Ovary (tissue), 10 donors: ENCODE measurements at regions of chr3 and their contacts with region 1.

Region 1: GRCh38 chr3:51501833-51502561 is 2.2 kb upstream of the DCAF1 start:
- DNase-seq: peak; percentile 69 to 89 (median 85)
- H3K4me3 ChIP-seq: no peak overlapping the region
- H3K27ac ChIP-seq: no peak overlapping the region
- H3K4me1 ChIP-seq: no peaks in the 10 kb centered on the region
- H3K27me3 ChIP-seq: no peaks in the 10 kb centered on the region
- CTCF ChIP-seq: peak; percentile 89 to 92 (median 90)
- EP300 ChIP-seq: no peak
- POLR2A ChIP-seq: no peak

Region 2: DNA sequence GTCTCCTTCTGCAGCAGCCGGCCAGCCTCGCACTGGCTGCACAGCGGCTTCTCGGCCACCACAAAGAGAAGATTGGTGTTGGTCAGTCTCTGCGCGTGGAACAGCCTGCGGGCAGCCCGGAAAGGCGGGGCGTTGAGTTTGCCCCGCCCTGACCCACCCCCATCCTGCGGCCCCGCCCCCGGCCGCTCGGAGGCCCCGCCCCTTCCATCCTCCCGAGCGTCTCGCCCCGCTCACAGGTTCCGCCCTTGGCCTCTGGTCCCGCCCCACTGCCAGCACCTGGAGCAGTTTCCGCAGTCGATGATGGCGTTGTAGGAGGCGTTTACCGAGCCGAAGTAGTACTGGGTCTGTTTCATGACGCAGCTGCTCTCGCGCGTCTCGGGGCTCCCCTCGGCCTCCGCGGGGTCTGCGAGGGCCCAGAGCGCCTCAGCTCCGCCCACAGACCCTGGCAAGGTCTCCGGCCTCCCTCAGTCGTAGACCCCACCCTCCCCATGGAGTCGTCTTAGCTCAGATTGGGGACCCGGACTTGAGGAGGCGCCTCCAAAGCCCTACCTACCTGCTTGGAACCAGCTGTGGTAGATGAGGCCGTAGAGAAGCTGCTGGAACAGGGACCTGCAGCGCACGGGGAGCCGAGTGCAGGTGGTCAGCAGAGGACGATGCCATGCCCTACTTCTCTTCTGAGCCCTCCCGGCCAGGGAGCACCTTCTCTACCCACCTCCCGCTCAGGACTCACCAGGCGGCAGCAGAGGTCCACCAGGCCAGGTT is 1136.7 kb before region 1 on chr3:
- intact Hi-C with region 1: loop called in 1 of 4 experiments (anchors 10 kb)
- DNase-seq: peak; percentile 88 to 92 (median 92)
- H3K4me3 ChIP-seq: peak overlapping the region; percentile 66
- H3K27ac ChIP-seq: peak overlapping the region in 1 of 2 donors; percentile 61
- H3K4me1 ChIP-seq: peaks cover 9% of the 10 kb centered on the region
- H3K27me3 ChIP-seq: no peaks in the 10 kb centered on the region
- CTCF ChIP-seq: no peak
- EP300 ChIP-seq: no peak
- POLR2A ChIP-seq: no peak

Region 3: GRCh38 chr3:51605938-51606337 is 103.9 kb after region 1 on chr3:
- intact Hi-C with region 1: no loop called
- DNase-seq: no peak
- H3K4me3 ChIP-seq: no peak overlapping the region
- H3K27ac ChIP-seq: no peak overlapping the region
- H3K4me1 ChIP-seq: no peaks in the 10 kb centered on the region
- H3K27me3 ChIP-seq: no peaks in the 10 kb centered on the region
- CTCF ChIP-seq: no peak
- EP300 ChIP-seq: no peak
- POLR2A ChIP-seq: no peak

Region 4: GRCh38 chr3:51799879-51800749 is 298.1 kb after region 1 on chr3:
- intact Hi-C with region 1: loop called in 2 of 4 experiments (anchors 5 to 10 kb)
- DNase-seq: no peak
- H3K4me3 ChIP-seq: no peak overlapping the region
- H3K27ac ChIP-seq: no peak overlapping the region
- H3K4me1 ChIP-seq: no peaks in the 10 kb centered on the region
- H3K27me3 ChIP-seq: no peaks in the 10 kb centered on the region
- CTCF ChIP-seq: peak; percentile 31 to 37 (median 35)
- EP300 ChIP-seq: no peak
- POLR2A ChIP-seq: no peak